Mammary epithelial cell (primary cell): ENCODE measurements at regions of chr19 and their contacts with region 1.

Region 1: GRCh38 chr19:7098701-7099596 is 29.4 kb downstream of the ZNF557 start:
- DNase-seq: peak; percentile 90
- H3K4me3 ChIP-seq: peak overlapping the region; percentile 64 to 73 (median 67)
- H3K27ac ChIP-seq: peak overlapping the region; percentile 44
- H3K4me1 ChIP-seq: peaks cover 6% of the 10 kb centered on the region
- H3K27me3 ChIP-seq: no peaks in the 10 kb centered on the region
- CTCF ChIP-seq: no peak

Region 2: DNA sequence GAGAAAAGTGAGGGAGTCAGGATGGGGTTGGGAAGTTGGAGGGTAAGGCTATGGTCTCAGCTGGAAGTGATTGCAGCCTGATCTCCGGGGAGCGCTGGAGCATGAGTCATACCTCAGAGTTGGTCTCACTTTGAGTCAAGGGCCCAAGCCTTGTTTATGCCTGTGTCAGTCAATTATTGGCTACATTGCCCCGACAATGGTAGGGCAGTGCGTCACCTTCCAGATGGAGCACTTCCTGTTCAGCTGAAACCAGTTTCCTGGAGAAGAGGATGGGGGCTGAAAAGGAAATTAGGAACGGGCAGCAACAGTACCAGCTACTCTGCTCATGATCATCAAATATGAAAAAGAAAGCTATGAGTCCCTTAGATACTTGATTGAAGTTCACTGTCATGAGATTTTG is 151.2 kb before region 1 on chr19:
- CTCF ChIA-PET with region 1: no interaction called
- dilution Hi-C with region 1: no loop called
- in situ Hi-C with region 1: no loop called
- intact Hi-C with region 1: no loop called
- DNase-seq: no peak
- H3K4me3 ChIP-seq: no peak overlapping the region
- H3K27ac ChIP-seq: no peak overlapping the region
- H3K4me1 ChIP-seq: no peaks in the 10 kb centered on the region
- H3K27me3 ChIP-seq: no peaks in the 10 kb centered on the region
- CTCF ChIP-seq: no peak

Region 3: DNA sequence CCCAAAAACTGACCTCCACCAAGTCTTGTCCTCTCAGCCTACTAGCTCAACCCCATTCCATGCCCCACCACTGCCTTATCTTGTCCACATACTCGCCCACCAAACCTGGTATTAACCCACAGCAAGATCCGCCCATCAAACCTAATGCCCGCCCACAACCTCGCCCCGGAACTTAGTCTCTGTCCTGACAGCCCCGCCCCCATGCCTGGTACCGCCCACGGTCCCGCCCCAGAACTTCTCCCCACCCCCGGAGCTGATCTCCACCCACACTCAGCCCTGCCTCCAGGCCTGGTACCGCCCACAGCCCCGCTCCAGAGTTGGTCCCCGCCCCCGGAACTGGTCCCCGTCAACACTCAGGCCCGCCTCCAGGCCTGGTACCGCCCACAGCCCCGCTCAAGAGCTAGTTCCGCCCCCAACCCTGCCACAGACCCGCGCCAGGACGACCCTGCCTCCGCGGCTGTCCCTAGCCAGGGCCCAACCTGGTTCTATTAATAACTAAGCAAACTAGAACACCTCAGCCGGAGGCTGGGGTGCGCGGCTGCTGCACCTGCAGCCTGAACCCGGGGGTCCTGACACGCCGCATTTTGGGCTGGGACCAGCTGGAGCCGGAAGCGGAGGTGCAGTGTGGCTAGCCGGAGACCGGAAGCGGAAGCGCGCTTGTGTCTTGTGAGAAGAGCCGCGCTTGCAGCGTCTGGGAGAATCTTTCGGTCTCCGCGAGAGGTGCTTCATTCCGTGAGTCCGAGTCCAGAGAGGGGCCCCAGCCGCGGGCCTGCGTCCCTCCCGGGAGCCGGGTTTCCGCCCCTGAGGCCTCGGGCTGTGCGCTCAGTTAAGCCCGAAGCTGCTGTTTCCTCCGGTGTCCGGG is 29.7 kb before region 1 on chr19 and contains the start of gene ZNF557:
- CTCF ChIA-PET with region 1: interaction called, 25 read pairs
- dilution Hi-C with region 1: no loop called
- in situ Hi-C with region 1: no loop called
- intact Hi-C with region 1: no loop called
- DNase-seq: peak; percentile 96
- H3K4me3 ChIP-seq: peak within 1 kb of the TSS; percentile 63 to 94 (median 89)
- H3K27ac ChIP-seq: peak within 1 kb of the TSS; percentile 51
- H3K4me1 ChIP-seq: peaks cover 6% of the 10 kb centered on the region
- H3K27me3 ChIP-seq: no peaks in the 10 kb centered on the region
- CTCF ChIP-seq: no peak
- total RNA-seq, gene ZNF557: 8.4 to 13.2 TPM

Region 4: DNA sequence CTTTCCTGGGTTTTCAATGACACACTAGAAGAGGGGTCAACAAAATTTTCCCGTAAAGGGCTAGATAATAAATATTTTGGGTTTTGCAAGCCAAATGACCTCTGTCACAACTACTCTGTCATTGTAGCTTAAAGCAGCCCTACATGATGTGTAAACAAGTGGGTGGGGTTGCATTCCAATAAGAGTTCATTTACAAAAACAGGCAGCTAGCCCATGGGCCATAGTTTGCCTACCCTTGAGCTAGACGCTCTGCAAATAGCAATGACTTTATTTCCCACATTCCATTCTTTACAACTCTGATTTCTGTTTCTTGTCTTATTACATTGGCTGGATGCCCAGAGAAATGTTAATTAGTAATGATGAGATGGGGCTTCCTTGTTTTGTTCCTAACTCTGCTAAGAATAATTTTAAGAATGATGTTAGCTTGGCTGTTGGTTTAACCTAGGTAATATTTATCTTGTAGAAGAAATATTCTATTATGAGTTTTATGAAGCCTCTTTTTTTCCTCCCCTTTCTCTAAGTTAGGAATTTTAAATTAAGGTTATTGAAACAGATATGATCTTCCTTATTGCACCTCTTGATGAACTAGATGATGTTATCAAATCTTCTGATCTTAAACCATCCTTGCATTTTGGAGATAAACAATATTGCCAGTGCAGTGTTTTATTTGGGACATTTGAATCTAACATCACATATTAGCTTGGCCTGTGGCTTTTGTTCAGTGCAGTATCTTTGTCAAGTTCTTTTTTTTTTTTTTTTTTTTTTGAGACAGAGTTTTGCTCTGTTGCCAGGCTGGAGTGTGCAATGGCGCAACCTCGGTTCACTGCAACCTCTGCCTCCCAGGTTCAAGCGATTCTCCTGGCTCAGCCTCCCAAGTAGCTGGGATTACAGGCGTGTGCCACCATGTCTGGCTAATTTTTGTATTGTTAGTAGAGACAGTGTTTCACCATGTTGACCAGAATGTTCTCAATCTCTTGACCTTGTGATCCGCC is 46.8 kb after region 1 on chr19:
- CTCF ChIA-PET with region 1: no interaction called
- dilution Hi-C with region 1: no loop called
- in situ Hi-C with region 1: no loop called
- intact Hi-C with region 1: loop called (anchors 1 kb)
- DNase-seq: no peak
- H3K4me3 ChIP-seq: no peak overlapping the region
- H3K27ac ChIP-seq: no peak overlapping the region
- H3K4me1 ChIP-seq: no peaks in the 10 kb centered on the region
- H3K27me3 ChIP-seq: no peaks in the 10 kb centered on the region
- CTCF ChIP-seq: no peak

Region 5: DNA sequence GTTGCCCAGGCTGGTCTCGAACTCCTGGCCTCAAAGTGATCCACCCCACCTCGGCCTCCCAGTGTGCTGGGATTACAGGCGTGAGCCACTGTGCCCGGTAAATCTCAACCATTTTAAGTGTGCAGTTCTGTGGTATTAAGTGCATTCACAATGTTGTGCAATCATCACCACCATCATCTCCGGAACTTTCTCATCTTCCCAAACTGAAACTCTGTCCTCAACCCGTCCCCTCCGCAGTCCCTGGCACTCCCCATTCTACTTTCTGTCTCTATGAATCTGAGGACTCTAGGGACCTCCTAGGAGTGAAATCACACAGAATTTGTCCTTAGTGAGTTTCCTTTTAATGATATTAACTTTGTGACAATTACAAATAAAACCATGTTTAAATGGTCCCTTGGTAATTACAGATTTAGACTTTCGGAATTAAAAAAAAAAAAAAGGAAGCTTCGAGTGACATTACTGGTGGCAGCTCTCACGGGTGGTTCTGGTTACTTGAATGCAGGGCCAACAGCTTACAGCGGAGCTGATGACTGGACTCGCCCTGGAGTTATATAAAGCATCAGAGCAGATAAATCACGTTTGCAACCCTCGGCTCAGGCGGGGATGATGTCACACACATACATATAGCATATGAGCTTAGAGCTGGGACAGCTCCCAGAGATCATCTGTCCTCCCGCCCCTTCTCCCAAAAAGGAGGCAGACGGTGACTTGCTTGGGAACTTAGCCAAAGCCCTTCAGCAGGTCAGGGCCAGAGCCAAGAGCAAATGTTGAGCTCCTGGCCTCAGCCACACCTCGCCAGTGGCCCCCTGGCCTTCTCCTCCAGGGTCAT is 60.4 kb after region 1 on chr19:
- CTCF ChIA-PET with region 1: no interaction called
- dilution Hi-C with region 1: loop called (anchors 5 kb)
- in situ Hi-C with region 1: no loop called
- intact Hi-C with region 1: no loop called
- DNase-seq: no peak
- H3K4me3 ChIP-seq: no peak overlapping the region
- H3K27ac ChIP-seq: no peak overlapping the region
- H3K4me1 ChIP-seq: no peaks in the 10 kb centered on the region
- H3K27me3 ChIP-seq: no peaks in the 10 kb centered on the region
- CTCF ChIP-seq: no peak

Region 6: DNA sequence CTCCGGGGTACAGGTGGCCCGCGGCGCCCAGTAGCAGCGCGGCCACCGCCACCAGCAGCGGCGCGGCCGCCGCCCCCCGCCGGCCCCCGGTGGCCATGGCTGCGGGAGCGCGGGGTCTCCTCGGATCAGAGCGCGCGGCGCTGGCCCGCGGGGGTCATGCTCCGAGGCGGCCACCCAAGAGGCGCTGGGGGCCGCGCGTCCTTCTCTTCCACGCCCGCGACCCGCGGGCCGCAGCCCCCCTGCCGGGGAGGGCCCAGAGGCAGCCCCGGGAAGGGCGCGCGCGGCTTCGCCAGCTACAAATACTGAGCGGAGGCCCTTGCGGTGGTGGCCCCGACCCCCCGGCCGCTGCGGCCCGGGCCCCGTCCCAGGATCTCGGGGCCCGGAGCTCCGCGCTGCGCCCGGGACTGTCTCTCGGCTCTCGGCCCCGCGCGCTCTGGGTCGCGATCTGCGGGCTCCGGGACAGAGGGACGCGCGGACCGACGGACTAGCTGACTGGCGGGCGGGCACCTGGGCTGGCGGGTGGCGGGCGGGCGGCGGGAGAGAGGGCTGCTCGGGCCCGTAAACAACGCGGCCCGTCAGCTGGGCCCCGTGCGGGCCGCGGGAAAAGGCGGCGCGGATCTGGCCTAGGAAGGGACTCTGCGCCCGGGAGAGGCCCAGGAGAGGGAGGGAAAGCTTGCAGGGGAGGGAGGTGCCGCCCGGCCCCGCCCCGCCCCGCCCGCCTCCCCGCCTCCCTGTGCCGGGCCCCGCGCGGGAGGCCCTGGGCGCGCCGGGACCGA is 195.0 kb after region 1 on chr19 and contains the start of gene INSR:
- CTCF ChIA-PET with region 1: no interaction called
- dilution Hi-C with region 1: no loop called
- in situ Hi-C with region 1: no loop called
- intact Hi-C with region 1: loop called (anchors 1 kb)
- DNase-seq: peak; percentile 91
- H3K4me3 ChIP-seq: peak within 1 kb of the TSS; percentile 45 to 57 (median 51)
- H3K27ac ChIP-seq: no peak within 1 kb of the TSS
- H3K4me1 ChIP-seq: no peaks in the 10 kb centered on the region
- H3K27me3 ChIP-seq: peaks cover 7% of the 10 kb centered on the region
- CTCF ChIP-seq: no peak
- total RNA-seq, gene INSR: 9.3 to 20.7 TPM

Region 7: DNA sequence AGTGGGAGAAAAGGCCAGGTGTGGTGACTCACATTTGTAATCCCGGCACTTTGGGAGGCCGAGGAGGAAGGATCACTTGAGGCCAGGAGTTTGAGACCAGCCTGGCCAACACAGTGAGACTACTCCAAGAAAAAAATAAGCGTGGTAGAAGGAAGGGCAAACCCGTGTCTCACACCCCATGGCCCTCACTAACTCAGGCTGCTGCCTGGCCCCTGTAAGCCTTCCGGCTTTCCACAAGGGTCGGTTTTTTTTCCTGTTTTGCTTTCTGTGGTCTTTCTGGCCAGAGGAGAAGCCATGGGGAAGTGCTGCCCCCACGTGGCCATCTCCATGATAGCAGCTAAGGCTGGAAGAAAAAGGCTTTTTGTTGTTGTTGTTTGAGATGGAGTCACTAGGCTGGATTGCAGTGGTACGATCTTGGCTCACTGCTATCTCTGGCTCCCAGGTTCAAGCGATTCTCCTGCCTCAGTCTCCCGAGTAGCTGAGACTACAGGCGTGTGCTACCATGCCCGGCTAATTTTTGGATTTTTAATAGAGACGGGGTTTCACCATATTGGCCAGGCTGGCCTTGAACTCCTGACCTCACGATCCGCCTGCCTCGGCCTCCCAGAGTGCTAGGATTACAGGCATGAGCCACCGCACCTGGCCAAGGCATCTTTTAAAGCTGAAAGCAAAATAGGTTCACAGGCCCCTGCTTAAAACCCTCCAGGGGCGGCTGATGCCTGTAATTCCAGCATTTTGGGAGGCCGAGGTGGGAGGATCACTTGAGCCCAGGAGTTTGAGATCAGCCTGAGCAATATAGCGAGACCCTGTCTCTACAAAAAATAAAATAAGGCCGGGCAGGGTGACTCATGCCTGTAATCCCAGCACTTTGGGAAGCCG is 242.2 kb after region 1 on chr19:
- CTCF ChIA-PET with region 1: interaction called, 3 read pairs
- dilution Hi-C with region 1: no loop called
- in situ Hi-C with region 1: loop called in 1 of 2 experiments (anchors 5 kb)
- intact Hi-C with region 1: loop called (anchors 1 kb)
- DNase-seq: peak; percentile 52
- H3K4me3 ChIP-seq: no peak overlapping the region
- H3K27ac ChIP-seq: no peak overlapping the region
- H3K4me1 ChIP-seq: no peaks in the 10 kb centered on the region
- H3K27me3 ChIP-seq: no peaks in the 10 kb centered on the region
- CTCF ChIP-seq: peak; percentile 82 to 86

Region 8: DNA sequence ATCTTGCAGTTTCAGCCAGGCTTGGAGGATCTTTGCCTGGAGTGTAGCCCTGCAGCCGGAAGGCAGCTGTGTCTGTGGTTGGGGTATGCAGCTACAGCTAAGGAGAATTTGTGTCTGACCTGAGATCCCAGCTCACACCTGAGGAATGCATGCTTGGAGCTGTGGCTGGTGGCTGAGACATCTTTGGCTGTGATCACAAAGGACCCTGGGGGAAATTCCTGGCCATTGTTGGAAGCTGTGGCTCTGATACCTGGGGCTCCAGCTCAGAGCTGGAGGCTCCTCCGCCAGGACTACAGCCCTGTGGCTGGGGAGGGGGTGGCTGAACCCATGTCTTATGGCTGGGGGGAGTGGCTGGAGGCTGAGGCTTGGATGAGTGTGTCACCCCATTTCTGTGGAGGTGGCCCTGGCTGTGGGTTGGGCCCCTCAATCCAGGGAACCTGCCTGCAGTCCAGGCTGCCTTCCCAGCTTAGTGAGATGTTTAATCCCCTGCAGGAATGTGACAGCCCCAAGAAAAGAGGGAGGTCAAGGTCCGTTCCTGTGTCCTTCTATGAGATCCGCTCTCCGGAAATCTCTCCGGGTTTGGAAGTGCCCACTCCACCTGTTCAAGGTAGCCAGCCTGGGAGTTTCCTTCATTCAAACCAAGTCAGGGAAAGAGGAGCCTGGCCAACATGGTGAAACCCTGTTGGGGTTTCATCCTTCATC is 277.4 kb after region 1 on chr19:
- CTCF ChIA-PET with region 1: no interaction called
- dilution Hi-C with region 1: no loop called
- in situ Hi-C with region 1: no loop called
- intact Hi-C with region 1: loop called (anchors 1 kb)
- DNase-seq: peak; percentile 59
- H3K4me3 ChIP-seq: no peak overlapping the region
- H3K27ac ChIP-seq: no peak overlapping the region
- H3K4me1 ChIP-seq: peaks cover 11% of the 10 kb centered on the region
- H3K27me3 ChIP-seq: no peaks in the 10 kb centered on the region
- CTCF ChIP-seq: no peak